ENCODE measurements at regions of chr12 and their contacts with region 1.

Region 1: GRCh38 chr12:121060149-121061001 is 21.3 kb upstream of the OASL start:
- DNase-seq: no peak
- H3K4me3 ChIP-seq: peak overlapping the region; percentile 42
- CTCF ChIP-seq: peak; percentile 65

Region 2: DNA sequence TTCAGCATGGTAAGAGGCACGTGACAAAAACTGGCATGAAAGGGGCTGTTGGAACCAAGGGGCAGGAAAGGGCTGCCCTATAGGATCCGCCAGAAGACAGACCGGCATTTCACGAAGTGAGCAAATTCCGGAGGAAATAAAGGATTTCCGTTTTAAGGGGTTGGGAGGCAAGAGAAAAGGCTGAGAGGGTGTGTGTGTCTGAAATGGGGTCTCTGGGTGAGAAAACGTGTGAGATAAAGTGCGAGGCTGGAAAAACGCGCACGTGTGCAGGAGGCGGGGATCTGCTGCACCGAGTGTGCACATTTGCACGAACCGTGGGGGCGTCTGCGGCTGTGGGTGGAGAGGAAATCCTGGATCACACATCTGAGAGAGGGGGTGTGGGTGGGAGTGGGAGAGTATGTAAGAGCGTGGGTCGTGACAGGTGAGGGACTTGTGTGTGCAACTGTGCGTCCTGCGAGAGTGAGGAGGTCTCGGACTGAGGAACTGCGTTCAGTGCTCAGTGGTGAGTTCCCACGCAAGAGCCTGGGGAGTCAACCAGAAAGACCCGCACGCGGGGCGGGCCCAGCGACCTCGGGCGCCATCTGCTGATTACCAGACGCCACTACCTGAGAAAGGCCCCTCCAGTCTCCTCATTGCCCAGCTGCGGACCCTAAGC is 35.3 kb after region 1 on chr12:
- CTCF ChIA-PET with region 1: interaction called, 36 read pairs
- POLR2A ChIA-PET with region 1: no interaction called
- DNase-seq: no peak
- H3K4me3 ChIP-seq: peak overlapping the region; percentile 53
- CTCF ChIP-seq: peak; percentile 90